Activated CD4-positive, alpha-beta memory T cell treated with anti-CD3 and anti-CD28 coated beads for 36 hours (primary cell): ENCODE measurements at regions of chr1 and their contacts with region 1.

Region 1: GRCh38 chr1:30950053-30950452 is 41.5 kb upstream of the SDC3 start:
- DNase-seq: no peak
- H3K4me3 Mint-ChIP-seq: no peak overlapping the region
- H3K27ac Mint-ChIP-seq: no peak overlapping the region
- H3K4me1 Mint-ChIP-seq: peaks cover 4% of the 10 kb centered on the region
- H3K27me3 Mint-ChIP-seq: no peaks in the 10 kb centered on the region

Region 2: DNA sequence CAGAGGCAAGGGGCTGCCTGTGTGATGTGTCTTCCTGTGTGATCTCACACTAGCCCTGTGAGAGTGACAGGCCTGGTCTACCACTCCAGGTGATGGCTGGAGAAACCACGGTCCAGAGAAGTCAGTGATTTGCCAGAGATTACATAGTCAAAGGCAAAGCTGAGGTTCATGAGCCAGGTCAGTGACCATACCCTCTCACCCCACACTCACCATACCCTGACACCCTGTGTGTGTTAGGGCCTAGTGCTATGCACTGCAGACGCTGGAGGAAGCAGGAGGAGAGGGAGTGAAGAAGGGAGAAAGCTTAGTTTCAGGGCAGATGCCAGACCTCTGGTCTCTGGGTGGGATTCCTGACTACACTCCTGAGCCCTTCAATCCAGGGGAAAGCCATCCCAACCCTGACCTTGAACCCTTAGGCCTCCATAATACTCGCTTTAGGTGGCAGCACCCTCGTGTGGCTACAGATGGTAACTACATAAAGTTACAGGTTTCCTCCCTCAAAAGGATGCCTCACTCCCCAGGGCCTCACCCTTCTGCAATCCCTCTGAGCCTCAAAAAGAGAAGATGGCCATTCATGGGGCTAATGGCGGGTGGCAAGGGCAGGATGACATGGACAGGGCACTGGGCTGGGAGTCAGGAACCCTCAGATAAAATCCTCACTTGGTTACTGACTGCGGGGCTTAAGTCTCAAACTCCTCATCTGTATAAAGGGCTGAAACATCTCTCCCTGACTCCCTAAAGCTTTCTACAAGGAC is 20.7 kb before region 1 on chr1:
- CTCF ChIA-PET with region 1: interaction called, 16 read pairs
- POLR2A ChIA-PET with region 1: no interaction called
- intact Hi-C with region 1: no loop called
- DNase-seq: peak; percentile 60
- H3K4me3 Mint-ChIP-seq: no peak overlapping the region
- H3K27ac Mint-ChIP-seq: no peak overlapping the region
- H3K4me1 Mint-ChIP-seq: no peaks in the 10 kb centered on the region
- H3K27me3 Mint-ChIP-seq: no peaks in the 10 kb centered on the region

Region 3: GRCh38 chr1:30969903-30970302 is 19.9 kb after region 1 on chr1:
- CTCF ChIA-PET with region 1: interaction called, 3 read pairs
- POLR2A ChIA-PET with region 1: no interaction called
- intact Hi-C with region 1: loop called (anchors 2 kb)
- DNase-seq: no peak
- H3K4me3 Mint-ChIP-seq: no peak overlapping the region
- H3K27ac Mint-ChIP-seq: no peak overlapping the region
- H3K4me1 Mint-ChIP-seq: peaks cover 10% of the 10 kb centered on the region
- H3K27me3 Mint-ChIP-seq: no peaks in the 10 kb centered on the region

Region 4: GRCh38 chr1:31010086-31010989 is 60.3 kb after region 1 on chr1:
- CTCF ChIA-PET with region 1: no interaction called
- POLR2A ChIA-PET with region 1: no interaction called
- intact Hi-C with region 1: no loop called
- DNase-seq: peak; percentile 46
- H3K4me3 Mint-ChIP-seq: peak overlapping the region; percentile 16
- H3K27ac Mint-ChIP-seq: peak overlapping the region; percentile 75
- H3K4me1 Mint-ChIP-seq: peaks cover 72% of the 10 kb centered on the region
- H3K27me3 Mint-ChIP-seq: no peaks in the 10 kb centered on the region